Prostate gland (tissue), 2 donors: ENCODE measurements at regions of chr6 and their contacts with region 1.

Region 1: GRCh38 chr6:39496915-39497314 is 174.4 kb upstream of the KCNK16 start:
- DNase-seq: peak; percentile 10
- H3K4me3 ChIP-seq: no peak overlapping the region
- H3K27ac ChIP-seq: no peak overlapping the region
- H3K4me1 ChIP-seq: no peaks in the 10 kb centered on the region
- H3K27me3 ChIP-seq: no peaks in the 10 kb centered on the region
- CTCF ChIP-seq: no peak
- POLR2A ChIP-seq: no peak

Region 2: DNA sequence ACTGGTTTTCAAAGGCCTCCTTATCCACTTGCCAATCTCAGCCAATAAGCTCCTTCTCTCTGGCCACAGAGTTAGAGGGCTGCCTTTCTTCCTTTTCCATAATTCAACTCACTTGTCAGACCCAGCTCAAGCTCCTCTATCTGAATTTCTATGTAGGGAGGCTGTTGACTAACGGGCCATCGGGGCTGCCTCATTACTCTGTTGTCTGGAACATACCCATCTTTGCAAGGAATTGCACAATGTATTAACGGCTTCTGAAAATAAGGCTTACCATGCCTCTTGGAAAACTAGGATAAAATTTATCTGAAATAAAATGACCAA is 256.8 kb after region 1 on chr6:
- intact Hi-C with region 1: loop called (anchors 10 kb)
- DNase-seq: no peak
- H3K4me3 ChIP-seq: no peak overlapping the region
- H3K27ac ChIP-seq: no peak overlapping the region
- H3K4me1 ChIP-seq: no peaks in the 10 kb centered on the region
- H3K27me3 ChIP-seq: no peaks in the 10 kb centered on the region
- CTCF ChIP-seq: no peak
- POLR2A ChIP-seq: no peak